Calu3 (cell line): ENCODE measurements at regions of chr3 and their contacts with region 1.

Region 1: GRCh38 chr3:127697551-127698240 is 24.9 kb downstream of the ABTB1 start:
- DNase-seq: peak; percentile 73
- H3K4me3 Mint-ChIP-seq: no peak overlapping the region
- H3K27ac Mint-ChIP-seq: peak overlapping the region; percentile 19
- H3K4me1 Mint-ChIP-seq: no peaks in the 10 kb centered on the region
- H3K27me3 Mint-ChIP-seq: no peaks in the 10 kb centered on the region
- CTCF ChIP-seq: no peak

Region 2: GRCh38 chr3:127275287-127275781 is 422.4 kb before region 1 on chr3:
- CTCF ChIA-PET with region 1: no interaction called
- intact Hi-C with region 1: no loop called
- DNase-seq: peak; percentile 78
- H3K4me3 Mint-ChIP-seq: peak overlapping the region; percentile 4
- H3K27ac Mint-ChIP-seq: peak overlapping the region; percentile 72
- H3K4me1 Mint-ChIP-seq: peaks cover 12% of the 10 kb centered on the region
- H3K27me3 Mint-ChIP-seq: peaks cover 2% of the 10 kb centered on the region
- CTCF ChIP-seq: no peak

Region 3: GRCh38 chr3:127584734-127585492 is 112.8 kb before region 1 on chr3:
- CTCF ChIA-PET with region 1: no interaction called
- intact Hi-C with region 1: no loop called
- DNase-seq: no peak
- H3K4me3 Mint-ChIP-seq: no peak overlapping the region
- H3K27ac Mint-ChIP-seq: no peak overlapping the region
- H3K4me1 Mint-ChIP-seq: peaks cover 34% of the 10 kb centered on the region
- H3K27me3 Mint-ChIP-seq: no peaks in the 10 kb centered on the region
- CTCF ChIP-seq: no peak

Region 4: DNA sequence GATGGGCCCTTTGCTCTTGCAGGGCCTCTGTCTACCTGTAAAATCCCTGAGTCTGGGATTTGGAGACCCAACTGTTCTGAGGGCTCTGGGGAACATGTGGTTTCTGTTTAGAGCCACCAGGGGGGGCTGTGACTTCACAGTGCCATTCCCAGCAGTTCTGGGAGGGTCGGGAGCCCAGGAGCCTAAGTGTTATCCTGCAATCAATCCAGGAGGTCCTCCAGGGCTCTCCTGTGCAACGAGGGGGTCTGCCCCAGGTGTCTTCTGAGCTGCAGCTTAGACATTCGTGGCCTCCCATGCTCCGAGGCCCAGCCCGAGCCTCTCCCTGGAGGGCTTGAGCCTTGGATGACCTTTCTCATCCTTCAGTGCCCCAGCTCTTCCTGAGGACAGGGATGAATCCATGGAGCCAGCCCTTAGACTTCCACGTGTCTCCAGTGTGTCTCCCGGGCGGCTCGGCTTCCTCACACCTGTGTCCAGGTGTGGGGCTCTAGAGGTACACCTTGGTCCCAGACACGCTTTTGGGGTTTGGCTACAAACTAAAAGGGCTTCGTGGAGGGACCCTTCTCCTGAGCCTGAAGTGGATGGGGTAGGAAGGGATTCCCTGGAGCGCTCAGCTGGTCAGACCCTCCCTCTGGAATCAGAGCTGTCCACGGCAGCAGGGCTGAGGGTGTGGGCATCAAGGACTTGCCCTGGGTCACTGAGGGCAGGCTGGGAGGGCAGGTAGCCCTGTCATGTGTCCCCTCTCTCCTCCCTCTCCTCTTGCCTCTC is 45.3 kb before region 1 on chr3:
- CTCF ChIA-PET with region 1: interaction called, 9 read pairs
- intact Hi-C with region 1: loop called (anchors 1 kb)
- DNase-seq: peak; percentile 78
- H3K4me3 Mint-ChIP-seq: no peak overlapping the region
- H3K27ac Mint-ChIP-seq: no peak overlapping the region
- H3K4me1 Mint-ChIP-seq: no peaks in the 10 kb centered on the region
- H3K27me3 Mint-ChIP-seq: no peaks in the 10 kb centered on the region
- CTCF ChIP-seq: peak; percentile 97

Region 5: GRCh38 chr3:127953091-127954035 is 255.7 kb after region 1 on chr3:
- CTCF ChIA-PET with region 1: no interaction called
- intact Hi-C with region 1: no loop called
- DNase-seq: no peak
- H3K4me3 Mint-ChIP-seq: no peak overlapping the region
- H3K27ac Mint-ChIP-seq: no peak overlapping the region
- H3K4me1 Mint-ChIP-seq: no peaks in the 10 kb centered on the region
- H3K27me3 Mint-ChIP-seq: no peaks in the 10 kb centered on the region
- CTCF ChIP-seq: no peak